Cardiac septum (tissue), 1 donor: ENCODE measurements at regions of chr5 and their contacts with region 1.

Region 1: DNA sequence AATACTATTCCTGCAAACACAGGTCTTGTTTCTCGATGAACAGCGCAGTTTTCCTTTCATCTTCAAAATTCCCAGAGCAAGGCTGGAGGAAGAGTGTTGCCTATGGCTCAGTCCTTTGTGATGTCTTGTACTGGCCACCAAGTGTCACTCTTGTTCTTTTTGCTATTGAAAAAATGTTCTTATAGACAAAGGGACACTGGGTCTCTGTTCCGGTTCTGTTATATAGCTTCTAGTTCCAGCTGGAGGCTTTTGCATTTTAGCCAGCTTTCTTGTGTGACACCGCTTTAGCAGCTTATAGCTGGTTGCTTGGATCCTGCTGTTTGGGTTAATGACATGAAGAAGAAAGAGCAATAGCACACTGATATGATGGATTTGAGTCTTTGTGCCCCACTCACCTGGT is 343.7 kb upstream of the KCNN2 start:
- DNase-seq: no peak

Region 2: DNA sequence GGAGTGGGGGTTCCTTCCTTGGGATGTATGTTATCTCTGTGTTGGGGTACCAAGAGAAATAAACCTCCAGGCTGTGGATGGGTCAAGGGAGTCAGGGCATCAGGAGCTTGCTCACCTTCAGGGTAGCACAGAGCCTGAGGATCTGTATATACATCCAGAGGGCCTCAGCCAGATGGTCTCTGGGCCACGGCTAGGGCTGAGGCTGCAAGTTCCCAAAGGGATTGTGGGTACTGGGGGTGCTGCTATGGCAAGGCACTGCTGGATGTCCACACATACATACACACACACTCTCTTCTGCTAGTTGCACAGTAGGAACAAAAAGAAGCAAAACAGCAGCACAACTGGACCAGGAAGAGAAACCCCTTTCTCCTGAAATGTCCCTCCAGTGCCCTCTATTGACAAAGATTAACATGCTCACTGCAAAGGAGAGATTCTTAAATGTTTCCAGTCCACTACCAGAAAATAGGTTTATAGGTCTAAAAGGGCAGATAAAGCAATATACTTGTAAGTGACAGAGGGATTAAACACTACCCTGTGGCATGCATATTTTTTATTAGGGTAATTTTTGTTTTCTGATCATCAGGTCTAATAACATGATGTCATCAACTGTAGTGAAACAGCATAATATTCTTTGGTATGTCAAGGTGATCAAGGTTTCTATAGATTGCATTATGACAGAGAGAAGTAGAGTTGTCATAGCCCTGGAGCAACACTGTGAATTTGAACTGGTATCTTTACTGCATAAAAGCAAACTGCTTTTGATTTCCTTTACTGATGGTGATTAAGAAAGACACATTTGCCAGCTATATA is 287.4 kb after region 1 on chr5:
- intact Hi-C with region 1: loop called (anchors 5 kb)
- DNase-seq: no peak